Activated CD4-positive, alpha-beta T cell treated with anti-CD3 and anti-CD28 coated beads for 36 hours (primary cell): ENCODE measurements at regions of chr6 and their contacts with region 1.

Region 1: DNA sequence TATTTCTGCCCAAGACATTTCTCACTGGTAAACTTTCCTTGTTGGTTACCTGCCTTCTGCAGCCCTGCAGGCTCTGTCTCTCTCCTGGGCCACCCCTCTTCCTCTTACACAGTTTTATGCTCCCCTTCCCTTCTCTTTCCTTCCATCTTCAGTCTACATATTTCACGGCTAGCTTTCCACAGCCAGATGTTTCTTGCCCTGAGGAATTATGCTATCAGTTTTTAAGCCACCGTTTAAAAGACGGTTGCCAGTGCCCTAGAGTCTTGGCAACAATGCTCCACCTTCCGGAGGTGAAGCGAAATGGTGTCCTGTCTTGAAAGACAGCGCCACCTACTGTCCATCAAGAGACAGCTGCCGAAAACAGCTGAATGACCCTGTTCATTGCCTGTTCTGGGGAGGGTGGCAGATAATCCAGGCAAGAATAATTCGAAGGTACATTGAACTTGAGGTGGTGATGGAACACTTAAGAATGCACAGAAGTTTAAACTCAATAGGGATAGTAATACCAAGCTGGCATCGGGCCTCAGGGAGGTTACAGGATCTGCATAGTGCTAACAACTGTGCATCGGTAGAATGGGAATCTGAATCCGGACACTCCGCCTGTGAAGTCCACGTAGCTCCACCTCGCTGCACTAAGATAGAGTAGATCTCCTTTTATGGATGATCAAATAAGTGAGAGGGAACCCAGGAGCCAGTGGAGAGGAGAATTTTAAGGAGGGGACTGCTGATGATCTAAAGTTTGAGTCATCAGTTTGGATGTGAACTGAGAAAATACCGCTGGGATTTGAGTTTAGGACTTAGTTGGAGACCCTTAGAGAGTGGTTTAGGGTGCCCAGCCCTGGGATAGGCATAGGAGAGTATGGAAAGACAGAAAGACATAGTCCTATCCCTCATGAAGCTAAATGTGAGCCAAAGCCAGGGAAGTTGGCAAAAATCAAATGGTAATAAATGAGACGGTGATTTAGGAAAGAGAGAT is 4.8 kb upstream of the TRIM40 start:
- DNase-seq: peak; percentile 79
- ATAC-seq: peak; percentile 90
- H3K4me3 Mint-ChIP-seq: no peak overlapping the region
- H3K27ac Mint-ChIP-seq: no peak overlapping the region
- H3K4me1 Mint-ChIP-seq: peaks cover 27% of the 10 kb centered on the region
- H3K27me3 Mint-ChIP-seq: peaks cover 62% of the 10 kb centered on the region

Region 2: DNA sequence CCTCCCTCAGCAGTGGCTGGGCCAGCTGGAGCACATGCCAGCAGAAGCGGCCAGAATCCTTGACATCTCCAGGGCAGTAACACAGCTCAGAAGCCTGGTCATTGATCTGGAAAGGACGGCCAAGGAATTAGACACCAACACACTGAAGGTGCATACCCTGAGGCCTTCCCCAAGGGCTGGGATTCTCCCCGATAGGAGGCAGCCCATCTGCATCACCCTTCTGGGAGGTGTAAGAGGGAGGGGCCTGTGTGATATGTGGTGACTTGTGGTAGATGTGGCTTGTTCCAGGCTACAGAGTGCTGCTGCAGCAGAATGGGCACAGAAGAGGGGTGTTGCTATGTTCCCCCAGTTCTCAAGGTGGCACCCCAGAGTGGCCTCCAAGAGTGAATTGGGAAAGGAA is 15.9 kb after region 1 on chr6:
- CTCF ChIA-PET with region 1: interaction called, 15 read pairs
- POLR2A ChIA-PET with region 1: no interaction called
- intact Hi-C with region 1: no loop called
- DNase-seq: no peak
- ATAC-seq: no peak
- H3K4me3 Mint-ChIP-seq: no peak overlapping the region
- H3K27ac Mint-ChIP-seq: no peak overlapping the region
- H3K4me1 Mint-ChIP-seq: no peaks in the 10 kb centered on the region
- H3K27me3 Mint-ChIP-seq: peaks cover 26% of the 10 kb centered on the region

Region 3: DNA sequence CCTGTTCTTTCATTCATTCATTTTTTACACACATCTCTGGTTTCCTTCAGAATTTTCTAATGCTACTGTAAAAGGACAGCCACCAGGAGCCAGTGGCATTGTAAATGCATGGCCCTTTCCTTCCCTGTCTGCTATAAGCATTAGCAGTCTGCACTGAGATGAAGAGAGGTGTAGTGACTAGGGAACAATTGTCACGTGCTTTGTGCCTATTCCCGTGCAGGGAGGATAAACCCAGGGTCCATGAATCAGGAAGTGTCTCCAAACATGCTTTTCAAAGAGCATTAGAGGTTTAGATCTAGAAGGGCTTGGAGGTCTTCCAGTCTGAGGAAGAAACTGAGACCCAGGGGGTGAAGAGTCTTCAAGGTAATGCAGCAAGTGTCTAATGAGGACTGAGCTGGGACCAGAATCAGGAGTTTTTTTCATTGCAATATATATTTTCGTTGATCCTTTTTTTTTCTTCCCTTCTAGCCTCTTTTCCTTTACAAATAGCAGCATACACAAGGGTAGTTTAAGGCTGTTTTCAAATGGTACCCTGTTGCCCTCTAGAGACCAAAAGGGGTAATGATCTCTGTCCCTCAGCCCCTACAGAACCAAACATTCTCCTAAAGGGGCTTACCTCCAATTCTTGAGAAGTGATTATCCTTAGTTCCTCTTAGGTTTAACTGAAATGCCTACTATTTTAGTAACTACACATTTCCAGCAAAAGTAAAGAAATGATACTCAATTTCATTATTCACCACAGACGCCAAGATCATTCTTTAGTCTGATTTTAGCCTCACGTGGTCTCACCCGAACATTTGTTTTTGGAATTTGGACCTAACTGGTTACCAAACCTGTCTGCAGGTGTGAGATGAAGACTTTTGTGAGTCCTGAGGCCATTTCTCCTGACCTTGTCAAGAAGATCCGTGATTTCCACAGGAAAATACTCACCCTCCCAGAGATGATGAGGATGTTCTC is 38.8 kb after region 1 on chr6:
- CTCF ChIA-PET with region 1: interaction called, 9 read pairs
- POLR2A ChIA-PET with region 1: no interaction called
- intact Hi-C with region 1: loop called (anchors 2 kb)
- DNase-seq: peak; percentile 16
- ATAC-seq: peak; percentile 83
- H3K4me3 Mint-ChIP-seq: no peak overlapping the region
- H3K27ac Mint-ChIP-seq: no peak overlapping the region
- H3K4me1 Mint-ChIP-seq: peaks cover 12% of the 10 kb centered on the region
- H3K27me3 Mint-ChIP-seq: peaks cover 38% of the 10 kb centered on the region

Region 4: GRCh38 chr6:30326526-30327260 is 195.5 kb after region 1 on chr6 and contains the start of gene TRIM39:
- CTCF ChIA-PET with region 1: no interaction called
- POLR2A ChIA-PET with region 1: no interaction called
- intact Hi-C with region 1: no loop called
- DNase-seq: peak; percentile 93
- ATAC-seq: peak; percentile 60
- H3K4me3 Mint-ChIP-seq: peak within 1 kb of the TSS; percentile 86
- H3K27ac Mint-ChIP-seq: peak within 1 kb of the TSS; percentile 97
- H3K4me1 Mint-ChIP-seq: peaks cover 54% of the 10 kb centered on the region
- H3K27me3 Mint-ChIP-seq: no peaks in the 10 kb centered on the region
- total RNA-seq, gene TRIM39: 16.5 to 17.5 TPM

Region 5: DNA sequence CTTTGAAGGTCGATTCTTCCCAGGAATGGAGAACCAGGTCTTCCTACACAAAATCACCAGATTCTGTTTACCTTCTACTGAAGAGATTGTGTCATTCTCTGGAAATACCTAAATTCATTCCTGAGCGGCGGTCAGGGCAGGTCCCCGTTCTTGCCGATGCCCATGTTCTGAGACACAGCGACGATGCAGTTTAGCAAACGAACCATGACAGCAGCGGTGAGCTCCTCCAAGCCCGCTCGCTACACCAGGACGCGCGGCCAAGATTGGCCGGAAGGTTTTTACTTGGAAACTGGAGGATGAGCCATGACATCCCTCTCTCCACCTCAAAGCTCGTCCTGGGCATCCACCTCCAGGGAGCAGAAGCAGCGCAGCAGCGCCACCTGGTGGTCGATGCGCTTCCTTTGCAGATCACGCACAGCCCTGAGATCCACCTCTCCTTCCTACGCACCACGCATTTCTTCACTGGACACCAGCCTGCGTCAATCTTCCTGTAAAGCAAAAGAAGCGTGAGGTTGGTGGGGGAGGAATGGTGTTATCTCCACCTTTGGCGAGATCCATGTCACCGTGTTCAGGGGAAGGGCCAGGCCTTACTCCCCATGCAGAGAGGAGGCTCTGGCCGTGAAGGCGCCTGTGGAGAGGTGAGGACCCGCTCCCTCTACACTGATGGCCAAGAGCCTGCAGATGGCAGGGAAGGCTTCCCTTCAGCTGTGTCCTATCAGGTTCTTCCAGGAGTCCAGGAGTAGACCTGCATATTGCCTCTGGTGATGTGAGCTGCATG is 1235.7 kb after region 1 on chr6:
- CTCF ChIA-PET with region 1: no interaction called
- POLR2A ChIA-PET with region 1: no interaction called
- intact Hi-C with region 1: no loop called
- DNase-seq: peak; percentile 88
- ATAC-seq: peak; percentile 96
- H3K4me3 Mint-ChIP-seq: peak overlapping the region; percentile 73
- H3K27ac Mint-ChIP-seq: peak overlapping the region; percentile 49
- H3K4me1 Mint-ChIP-seq: peaks cover 21% of the 10 kb centered on the region
- H3K27me3 Mint-ChIP-seq: peaks cover 22% of the 10 kb centered on the region